Heart left ventricle (tissue), 16 donors: ENCODE measurements at regions of chr15 and their contacts with region 1.

Region 1: DNA sequence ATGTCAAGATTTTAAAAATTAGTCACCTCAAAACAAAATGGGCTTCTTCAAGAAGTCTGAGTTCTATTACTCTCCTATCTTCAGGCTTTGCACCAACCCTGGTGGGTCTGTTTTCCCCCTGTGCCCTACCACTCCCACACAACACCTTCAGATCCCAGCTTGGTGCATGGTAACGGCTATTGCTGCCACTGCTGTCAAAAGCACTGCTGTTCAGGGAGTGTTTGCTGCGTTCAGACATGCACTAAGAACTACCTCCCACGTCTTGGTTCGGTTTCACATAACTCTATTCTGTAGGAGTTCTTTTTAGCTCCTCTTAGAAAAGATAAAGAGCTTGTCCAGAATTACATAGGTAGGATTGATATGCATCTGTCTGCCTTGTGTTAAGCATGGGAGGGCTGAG is 799.2 kb downstream of the NR2F2 start:
- DNase-seq: no peak
- ATAC-seq: no peak
- H3K4me3 ChIP-seq: no peak overlapping the region
- H3K27ac ChIP-seq: no peak overlapping the region
- H3K4me1 ChIP-seq: no peaks in the 10 kb centered on the region
- H3K27me3 ChIP-seq: no peaks in the 10 kb centered on the region
- CTCF ChIP-seq: no peak
- POLR2A ChIP-seq: no peak

Region 2: GRCh38 chr15:96818861-96819260 is 310.8 kb before region 1 on chr15:
- intact Hi-C with region 1: no loop called
- DNase-seq: no peak
- ATAC-seq: no peak
- H3K4me3 ChIP-seq: no peak overlapping the region
- H3K27ac ChIP-seq: no peak overlapping the region
- H3K4me1 ChIP-seq: no peaks in the 10 kb centered on the region
- H3K27me3 ChIP-seq: peaks cover 0 to 5% (median 0%) of the 10 kb centered on the region in 9 donors
- CTCF ChIP-seq: no peak
- POLR2A ChIP-seq: no peak

Region 3: GRCh38 chr15:97174886-97175540 is 45.3 kb after region 1 on chr15:
- intact Hi-C with region 1: loop called in 1 of 10 experiments (anchors 5 kb)
- DNase-seq: no peak
- ATAC-seq: no peak
- H3K4me3 ChIP-seq: no peak overlapping the region
- H3K27ac ChIP-seq: no peak overlapping the region
- H3K4me1 ChIP-seq: no peaks in the 10 kb centered on the region
- H3K27me3 ChIP-seq: peaks cover 0 to 14% (median 0%) of the 10 kb centered on the region in 9 donors
- CTCF ChIP-seq: no peak
- POLR2A ChIP-seq: no peak

Region 4: DNA sequence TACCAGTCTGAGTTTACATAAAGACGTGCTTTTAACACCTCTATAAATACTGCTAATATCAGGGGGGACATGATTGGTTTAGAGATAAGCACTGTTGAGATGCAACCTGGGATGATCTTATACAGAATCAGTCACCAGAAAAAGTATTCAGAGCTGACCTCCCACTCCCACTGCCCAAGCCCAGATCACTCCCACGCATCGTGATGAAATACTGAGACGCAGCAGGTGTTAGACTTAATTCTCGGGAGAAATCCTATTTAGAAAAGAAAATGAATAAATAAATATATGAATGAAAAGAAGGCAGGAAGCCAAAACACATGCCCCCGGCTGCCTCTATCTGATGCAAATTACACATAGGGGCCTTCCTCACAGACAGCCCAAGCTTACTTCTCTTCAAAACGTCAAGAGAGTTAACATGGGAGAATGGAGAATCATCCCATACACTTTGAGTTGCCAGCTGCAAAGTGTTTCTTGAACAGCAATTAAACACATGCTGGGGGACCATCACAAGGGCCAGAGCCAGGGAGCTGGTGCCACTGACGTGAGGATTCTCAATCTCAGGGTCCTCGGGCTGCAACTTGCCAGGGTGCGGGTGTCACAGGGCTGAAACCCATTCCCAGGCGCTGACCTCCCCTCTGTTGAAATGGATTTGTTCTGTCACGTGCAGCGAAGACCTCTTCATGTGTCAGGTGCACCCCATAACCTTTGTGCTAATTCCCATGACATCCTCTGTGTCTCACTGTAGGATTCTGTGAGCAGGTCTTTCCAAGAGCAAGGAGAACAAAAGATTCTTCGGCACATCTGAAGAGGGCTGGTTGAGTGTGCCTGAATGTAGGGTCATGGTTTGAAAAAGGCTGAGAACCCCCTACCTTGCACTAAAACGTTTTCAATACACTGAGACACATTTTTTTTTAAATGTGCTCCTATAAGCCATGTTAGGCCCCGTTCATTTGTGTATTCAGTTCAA is 66.7 kb after region 1 on chr15:
- intact Hi-C with region 1: loop called in 1 of 10 experiments (anchors 10 kb)
- DNase-seq: no peak
- ATAC-seq: no peak
- H3K4me3 ChIP-seq: no peak overlapping the region
- H3K27ac ChIP-seq: no peak overlapping the region
- H3K4me1 ChIP-seq: no peaks in the 10 kb centered on the region
- H3K27me3 ChIP-seq: peaks cover 0 to 4% (median 0%) of the 10 kb centered on the region in 9 donors
- CTCF ChIP-seq: no peak
- POLR2A ChIP-seq: no peak